ENCODE measurements at regions of chr5 and their contacts with region 1.

Region 1: GRCh38 chr5:134176511-134177368 is at the start of gene SKP1:
- DNase-seq: peak; percentile 81 to 92 (median 85)
- H3K4me3 ChIP-seq: peak within 1 kb of the TSS; percentile 90
- H3K27ac ChIP-seq: peak within 1 kb of the TSS; percentile 97 to 99
- H3K4me1 ChIP-seq: peaks cover 5% of the 10 kb centered on the region
- H3K27me3 ChIP-seq: no peaks in the 10 kb centered on the region
- CTCF ChIP-seq: peak in 1 of 3 donors; percentile 27
- EP300 ChIP-seq: no peak
- POLR2A ChIP-seq: peak; percentile 94
- total RNA-seq, gene SKP1: 263 to 464 (median 361) TPM

Region 2: GRCh38 chr5:134225618-134226440 is 49.1 kb after region 1 on chr5 and contains the start of gene PPP2CA:
- intact Hi-C with region 1: loop called in 2 of 4 experiments (anchors 5 to 10 kb)
- DNase-seq: peak; percentile 99 to 100 (median 99)
- H3K4me3 ChIP-seq: peak within 1 kb of the TSS; percentile 64
- H3K27ac ChIP-seq: peak within 1 kb of the TSS; percentile 99
- H3K4me1 ChIP-seq: peaks cover 14% of the 10 kb centered on the region
- H3K27me3 ChIP-seq: no peaks in the 10 kb centered on the region
- CTCF ChIP-seq: peak in 1 of 3 donors; percentile 27
- EP300 ChIP-seq: peak; percentile 31
- POLR2A ChIP-seq: peak; percentile 95
- total RNA-seq, gene PPP2CA: 76.1 to 142 (median 91.6) TPM